Right ventricle myocardium inferior (tissue), 1 donor: ENCODE measurements at regions of chr12 and their contacts with region 1.

Region 1: GRCh38 chr12:120783197-120783596 is 57.6 kb downstream of the ACADS start:
- DNase-seq: no peak
- ATAC-seq: no peak

Region 2: DNA sequence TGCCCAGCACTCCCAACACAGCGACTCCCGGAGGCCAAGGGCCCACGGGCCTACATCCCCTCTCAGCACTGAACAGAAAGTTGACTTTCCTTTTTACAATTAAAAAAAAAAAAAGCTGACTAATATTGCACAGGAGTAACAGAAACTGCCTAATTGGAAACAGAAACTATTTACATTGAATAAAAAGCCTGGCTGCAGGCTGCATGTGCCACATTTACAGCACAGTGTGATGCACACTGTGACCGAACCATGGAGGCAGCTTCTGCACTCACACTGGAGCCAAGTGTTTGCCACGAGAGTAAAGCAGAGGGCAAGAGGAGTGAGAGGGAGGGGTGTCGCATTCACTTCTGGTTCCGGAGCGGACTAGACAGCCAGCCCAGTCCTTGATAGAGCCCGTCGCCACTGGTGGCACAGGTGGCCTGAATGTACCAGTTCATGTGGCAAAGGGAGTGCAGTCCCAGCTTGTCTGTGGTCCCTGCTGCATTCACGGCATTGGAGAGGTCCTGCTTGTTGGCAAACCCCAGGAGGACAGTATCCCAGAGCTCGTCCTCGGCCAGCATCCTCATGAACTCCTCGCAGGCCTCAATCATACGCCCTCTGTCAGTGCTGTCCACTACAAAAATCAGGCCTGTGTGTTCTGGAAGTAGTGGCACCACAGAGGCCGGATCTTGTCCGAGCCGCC is 61.7 kb after region 1 on chr12:
- intact Hi-C with region 1: loop called (anchors 5 kb)
- DNase-seq: no peak
- ATAC-seq: no peak

Region 3: DNA sequence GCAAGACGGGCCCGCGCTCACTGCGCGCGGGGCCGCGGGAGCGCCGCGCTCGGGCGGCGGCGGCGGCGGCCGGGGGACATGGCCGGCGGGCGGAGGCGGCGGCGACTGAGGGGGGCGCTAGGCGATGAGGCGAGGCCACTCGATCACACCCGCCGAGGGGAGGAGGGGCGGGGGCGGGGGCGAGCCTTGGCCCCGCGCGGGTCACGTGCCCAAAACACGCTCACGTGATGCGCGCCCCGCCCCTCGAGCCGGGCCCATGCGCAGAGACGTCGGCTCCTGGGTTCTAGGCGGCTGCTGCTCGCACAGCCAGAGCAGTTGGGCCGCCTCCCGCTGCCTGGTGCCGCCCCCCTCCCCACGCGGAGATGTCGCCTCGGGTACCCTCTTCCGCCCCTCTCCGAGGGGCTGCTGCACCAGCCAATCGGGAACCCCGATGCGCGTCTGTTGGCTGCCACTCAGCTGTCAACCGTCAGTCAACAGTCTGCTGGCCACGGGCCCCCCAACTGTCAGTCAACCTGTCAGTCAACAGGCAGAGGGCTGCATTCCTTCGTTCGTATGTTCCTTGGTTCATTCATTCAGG is 121.1 kb after region 1 on chr12 and contains the start of gene SPPL3:
- intact Hi-C with region 1: loop called (anchors 10 kb)
- DNase-seq: peak; percentile 98
- ATAC-seq: peak; percentile 95
- total RNA-seq, gene SPPL3: 30.4 TPM